ENCODE measurements at regions of chr20 and their contacts with region 1.

Region 1: GRCh38 chr20:40962730-40963504 is 65.7 kb upstream of the TOP1 start:
- DNase-seq: peak; percentile 36 to 76 (median 64)
- ATAC-seq: peak; percentile 90
- H3K4me3 ChIP-seq: no peak overlapping the region
- H3K4me3 Mint-ChIP-seq: no peak overlapping the region
- H3K27ac ChIP-seq: no peak overlapping the region
- H3K27ac Mint-ChIP-seq: no peak overlapping the region
- H3K4me1 ChIP-seq: peaks cover 0 to 15% of the 10 kb centered on the region in 2 donors
- H3K4me1 Mint-ChIP-seq: peaks cover 0 to 11% (median 9%) of the 10 kb centered on the region in 7 donors
- H3K27me3 ChIP-seq: no peaks in the 10 kb centered on the region
- H3K27me3 Mint-ChIP-seq: peaks cover 0 to 5% (median 0%) of the 10 kb centered on the region in 5 donors

Region 2: DNA sequence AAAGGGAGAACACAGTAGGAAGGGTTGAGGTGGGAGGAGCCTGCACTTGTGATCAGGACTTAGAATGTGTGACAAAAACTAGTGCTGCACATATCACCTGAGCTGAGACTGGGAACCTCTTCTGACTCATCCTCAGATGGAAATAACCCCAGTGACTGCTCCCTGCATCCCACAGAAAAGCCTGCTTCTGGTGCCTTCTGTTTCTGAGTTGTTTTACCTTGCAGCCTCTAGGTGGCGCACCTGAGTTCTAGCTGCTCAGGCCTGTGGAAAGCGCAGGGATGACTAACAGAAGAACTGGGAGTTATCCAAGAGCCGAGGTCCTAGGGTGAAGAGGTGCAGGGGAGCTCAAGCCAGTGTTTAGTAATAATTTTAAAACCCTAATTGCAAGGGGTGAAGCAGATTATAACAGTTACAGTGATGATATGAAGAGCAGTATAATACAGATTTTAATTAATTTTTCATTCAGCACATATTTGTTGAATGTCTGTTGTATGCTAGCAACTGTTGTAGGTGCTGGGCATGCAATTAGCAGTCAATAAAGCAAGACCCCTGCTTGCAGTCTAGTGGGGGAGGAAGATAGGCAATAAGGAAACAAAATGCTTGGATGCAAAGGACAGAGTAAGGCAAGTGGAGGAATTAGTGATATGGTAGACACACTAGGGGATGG is 1698.3 kb before region 1 on chr20:
- CTCF ChIA-PET with region 1: no interaction called
- POLR2A ChIA-PET with region 1: no interaction called
- intact Hi-C with region 1: loop called in 1 of 2 experiments (anchors 2 kb)
- DNase-seq: peak in 4 of 9 donors; percentile 3 to 42 (median 10)
- ATAC-seq: peak; percentile 34
- H3K4me3 ChIP-seq: no peak overlapping the region
- H3K4me3 Mint-ChIP-seq: no peak overlapping the region
- H3K27ac ChIP-seq: no peak overlapping the region
- H3K27ac Mint-ChIP-seq: no peak overlapping the region
- H3K4me1 ChIP-seq: no peaks in the 10 kb centered on the region
- H3K4me1 Mint-ChIP-seq: peaks cover 0 to 1% (median 0%) of the 10 kb centered on the region in 7 donors
- H3K27me3 ChIP-seq: no peaks in the 10 kb centered on the region
- H3K27me3 Mint-ChIP-seq: peaks cover 8 to 17% (median 9%) of the 10 kb centered on the region in 5 donors

Region 3: GRCh38 chr20:39885975-39886649 is 1076.8 kb before region 1 on chr20:
- CTCF ChIA-PET with region 1: no interaction called
- POLR2A ChIA-PET with region 1: no interaction called
- intact Hi-C with region 1: loop called in 1 of 2 experiments (anchors 5 kb)
- DNase-seq: no peak
- ATAC-seq: no peak
- H3K4me3 ChIP-seq: no peak overlapping the region
- H3K4me3 Mint-ChIP-seq: no peak overlapping the region
- H3K27ac ChIP-seq: no peak overlapping the region
- H3K27ac Mint-ChIP-seq: no peak overlapping the region
- H3K4me1 ChIP-seq: no peaks in the 10 kb centered on the region
- H3K4me1 Mint-ChIP-seq: no peaks in the 10 kb centered on the region
- H3K27me3 ChIP-seq: no peaks in the 10 kb centered on the region
- H3K27me3 Mint-ChIP-seq: peaks cover 0 to 17% (median 7%) of the 10 kb centered on the region in 5 donors

Region 4: GRCh38 chr20:40741507-40742106 is 221.3 kb before region 1 on chr20:
- CTCF ChIA-PET with region 1: no interaction called
- POLR2A ChIA-PET with region 1: no interaction called
- intact Hi-C with region 1: loop called in 1 of 2 experiments (anchors 1 kb)
- DNase-seq: peak in 3 of 9 donors; percentile 4 to 40 (median 12)
- ATAC-seq: peak; percentile 64
- H3K4me3 ChIP-seq: no peak overlapping the region
- H3K4me3 Mint-ChIP-seq: no peak overlapping the region
- H3K27ac ChIP-seq: no peak overlapping the region
- H3K27ac Mint-ChIP-seq: no peak overlapping the region
- H3K4me1 ChIP-seq: no peaks in the 10 kb centered on the region
- H3K4me1 Mint-ChIP-seq: peaks cover 0 to 5% (median 0%) of the 10 kb centered on the region in 7 donors
- H3K27me3 ChIP-seq: no peaks in the 10 kb centered on the region
- H3K27me3 Mint-ChIP-seq: peaks cover 0 to 14% (median 8%) of the 10 kb centered on the region in 5 donors

Region 5: GRCh38 chr20:40797425-40797824 is 165.5 kb before region 1 on chr20:
- CTCF ChIA-PET with region 1: interaction called, 4 read pairs
- POLR2A ChIA-PET with region 1: no interaction called
- intact Hi-C with region 1: loop called in 1 of 2 experiments (anchors 1 kb)
- DNase-seq: peak in 1 of 9 donors; percentile 1
- ATAC-seq: no peak
- H3K4me3 ChIP-seq: no peak overlapping the region
- H3K4me3 Mint-ChIP-seq: no peak overlapping the region
- H3K27ac ChIP-seq: no peak overlapping the region
- H3K27ac Mint-ChIP-seq: no peak overlapping the region
- H3K4me1 ChIP-seq: no peaks in the 10 kb centered on the region
- H3K4me1 Mint-ChIP-seq: no peaks in the 10 kb centered on the region
- H3K27me3 ChIP-seq: peaks cover 0 to 3% of the 10 kb centered on the region in 2 donors
- H3K27me3 Mint-ChIP-seq: peaks cover 16 to 38% (median 26%) of the 10 kb centered on the region in 5 donors

Region 6: DNA sequence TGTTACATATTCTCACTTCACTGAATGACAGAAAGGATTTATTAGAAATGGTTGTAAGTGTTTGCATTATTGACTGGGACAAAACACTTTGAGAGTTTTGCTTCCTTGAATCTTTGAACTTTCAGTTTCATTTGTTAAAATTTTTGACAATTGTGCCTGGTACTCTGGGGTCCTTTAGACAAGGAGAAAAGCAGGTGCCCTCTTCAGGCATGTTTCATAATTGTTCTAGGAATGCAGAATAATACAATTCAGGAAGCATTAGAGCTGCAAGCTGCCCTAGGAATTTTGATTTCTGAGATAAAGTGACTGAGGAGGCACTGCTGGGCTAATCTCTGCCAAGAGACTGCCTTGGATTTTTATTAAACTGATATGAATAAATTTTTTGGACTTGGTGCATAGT is 115.4 kb after region 1 on chr20:
- CTCF ChIA-PET with region 1: interaction called, 3 read pairs
- POLR2A ChIA-PET with region 1: no interaction called
- intact Hi-C with region 1: loop called in 1 of 2 experiments (anchors 5 kb)
- DNase-seq: peak in 1 of 9 donors; percentile 16
- ATAC-seq: peak; percentile 45
- H3K4me3 ChIP-seq: no peak overlapping the region
- H3K4me3 Mint-ChIP-seq: peak overlapping the region in 6 of 10 donors; percentile 24 to 56 (median 49)
- H3K27ac ChIP-seq: no peak overlapping the region
- H3K27ac Mint-ChIP-seq: peak overlapping the region; percentile 24 to 76 (median 63)
- H3K4me1 ChIP-seq: peaks cover 4 to 40% of the 10 kb centered on the region in 2 donors
- H3K4me1 Mint-ChIP-seq: peaks cover 37 to 71% (median 66%) of the 10 kb centered on the region in 7 donors
- H3K27me3 ChIP-seq: no peaks in the 10 kb centered on the region
- H3K27me3 Mint-ChIP-seq: no peaks in the 10 kb centered on the region

Region 7: GRCh38 chr20:41095110-41095969 is 132.4 kb after region 1 on chr20:
- CTCF ChIA-PET with region 1: interaction called, 15 read pairs
- POLR2A ChIA-PET with region 1: no interaction called
- intact Hi-C with region 1: loop called (anchors 1 kb)
- DNase-seq: peak; percentile 27 to 63 (median 54)
- ATAC-seq: peak; percentile 85
- H3K4me3 ChIP-seq: no peak overlapping the region
- H3K4me3 Mint-ChIP-seq: no peak overlapping the region
- H3K27ac ChIP-seq: no peak overlapping the region
- H3K27ac Mint-ChIP-seq: peak overlapping the region in 4 of 9 donors; percentile 31 to 77 (median 52)
- H3K4me1 ChIP-seq: no peaks in the 10 kb centered on the region
- H3K4me1 Mint-ChIP-seq: peaks cover 0 to 11% (median 4%) of the 10 kb centered on the region in 7 donors
- H3K27me3 ChIP-seq: no peaks in the 10 kb centered on the region
- H3K27me3 Mint-ChIP-seq: no peaks in the 10 kb centered on the region